Naive thymus-derived CD4-positive, alpha-beta T cell (primary cell): ENCODE measurements at regions of chrX and their contacts with region 1.

Region 1: DNA sequence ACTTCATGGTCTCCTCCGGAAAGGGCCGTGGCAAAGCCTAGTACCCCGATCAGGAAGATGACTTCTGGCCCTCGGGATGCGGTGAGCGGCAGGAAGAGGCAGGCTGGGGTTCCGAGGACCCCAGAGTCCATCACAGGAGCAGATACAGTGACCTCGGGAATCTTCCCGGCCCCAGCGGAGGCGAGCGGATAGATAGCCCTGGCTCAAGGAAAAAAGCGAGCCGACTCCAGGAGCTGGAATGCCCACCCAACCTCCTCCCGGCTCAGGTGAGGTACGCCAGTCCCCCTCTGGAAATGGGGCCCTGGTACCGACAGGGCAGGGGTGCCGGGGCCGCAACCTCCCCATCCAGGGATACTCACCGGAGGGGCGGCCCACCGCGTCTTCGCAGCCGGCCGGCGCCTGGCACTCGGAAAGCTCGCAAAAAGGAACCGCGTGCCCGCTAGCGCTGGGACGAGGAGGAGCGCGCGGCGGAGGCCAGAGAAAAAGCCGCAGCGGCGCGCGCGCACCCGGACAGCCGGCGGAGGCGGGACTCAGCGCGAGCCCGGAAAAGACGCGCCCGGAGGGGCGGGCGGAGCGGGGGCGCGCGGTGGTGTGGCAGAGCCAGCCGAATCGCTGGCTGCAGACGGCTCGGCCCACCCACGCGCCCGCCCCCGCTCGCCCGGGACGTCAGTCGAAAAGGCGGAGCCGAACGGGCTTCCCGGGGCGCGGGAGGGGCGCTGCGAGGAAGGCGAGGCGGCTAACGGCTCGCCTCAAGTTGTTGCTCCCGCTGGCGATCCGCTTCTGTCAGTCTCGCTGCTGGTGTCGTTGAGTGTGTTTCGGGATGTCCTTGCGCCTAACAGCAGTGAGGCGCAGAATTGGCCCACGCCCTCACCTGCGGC is at the start of gene ACSL4:
- DNase-seq: peak; percentile 74 to 89 (median 84)
- ATAC-seq: peak; percentile 97
- H3K4me3 ChIP-seq: peak within 1 kb of the TSS; percentile 92
- H3K4me3 Mint-ChIP-seq: peak within 1 kb of the TSS; percentile 93 to 97 (median 96)
- H3K27ac ChIP-seq: peak within 1 kb of the TSS; percentile 86
- H3K27ac Mint-ChIP-seq: peak within 1 kb of the TSS; percentile 92 to 98 (median 94)
- H3K4me1 ChIP-seq: peaks cover 4 to 6% of the 10 kb centered on the region in 2 donors
- H3K4me1 Mint-ChIP-seq: peaks cover 13 to 36% (median 26%) of the 10 kb centered on the region in 7 donors
- H3K27me3 ChIP-seq: no peaks in the 10 kb centered on the region
- H3K27me3 Mint-ChIP-seq: no peaks in the 10 kb centered on the region
- total RNA-seq, gene ACSL4: 13.4 to 43.9 (median 21.6) TPM

Region 2: DNA sequence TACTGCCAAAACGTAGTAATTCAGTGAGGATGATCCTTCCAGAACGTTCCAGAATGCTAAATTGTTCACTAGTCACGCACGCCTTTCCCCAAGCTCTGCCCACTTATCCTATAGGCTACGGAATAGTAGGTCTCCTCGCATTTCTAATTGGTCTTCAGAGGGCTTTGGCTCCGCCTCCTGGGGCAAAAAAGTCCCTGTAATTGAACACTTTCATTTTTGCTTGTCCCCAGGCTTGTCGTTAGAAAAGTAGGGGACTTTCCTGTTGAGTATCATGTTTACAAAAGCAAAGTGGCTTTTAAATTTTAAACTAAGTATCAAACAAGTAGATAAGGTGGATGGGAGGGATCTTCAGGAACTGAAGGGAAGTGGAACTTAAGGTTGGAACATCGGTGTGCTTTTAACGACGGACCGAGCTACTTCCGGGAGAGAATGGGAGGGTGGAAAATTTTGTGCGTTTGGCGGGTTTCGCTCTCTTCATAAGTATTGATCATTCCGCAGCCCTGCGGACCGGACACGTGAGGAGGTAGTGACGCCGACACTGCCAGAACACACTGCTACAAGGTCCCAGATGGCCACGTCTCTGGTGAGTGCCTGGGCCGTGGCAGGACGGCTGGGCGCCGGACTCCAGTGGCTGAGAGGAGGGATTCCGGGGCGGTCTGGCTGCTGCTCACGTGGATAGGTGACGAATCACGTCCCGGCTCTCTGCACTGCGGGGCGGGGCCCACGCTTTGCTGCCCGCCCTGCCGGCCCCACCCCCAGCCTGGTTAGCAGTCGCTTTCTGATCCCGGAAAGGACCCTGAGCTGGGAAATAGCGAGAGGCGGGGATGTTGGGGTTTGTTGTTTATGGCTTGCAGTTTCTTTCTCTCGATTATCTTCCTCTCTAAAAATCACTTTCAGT is 196.3 kb before region 1 on chrX and contains the start of gene NXT2:
- CTCF ChIA-PET with region 1: no interaction called
- POLR2A ChIA-PET with region 1: interaction called, 7 read pairs
- intact Hi-C with region 1: loop called (anchors 1 kb)
- DNase-seq: peak; percentile 64 to 89 (median 83)
- ATAC-seq: peak; percentile 100
- H3K4me3 ChIP-seq: peak within 1 kb of the TSS; percentile 87
- H3K4me3 Mint-ChIP-seq: peak within 1 kb of the TSS; percentile 79 to 98 (median 95)
- H3K27ac ChIP-seq: peak within 1 kb of the TSS; percentile 87
- H3K27ac Mint-ChIP-seq: peak within 1 kb of the TSS; percentile 92 to 99 (median 98)
- H3K4me1 ChIP-seq: peaks cover 0 to 3% of the 10 kb centered on the region in 2 donors
- H3K4me1 Mint-ChIP-seq: peaks cover 0 to 14% (median 8%) of the 10 kb centered on the region in 7 donors
- H3K27me3 ChIP-seq: no peaks in the 10 kb centered on the region
- H3K27me3 Mint-ChIP-seq: peaks cover 0 to 19% (median 12%) of the 10 kb centered on the region in 5 donors
- total RNA-seq, gene NXT2: 5.7 to 13.5 (median 7.7) TPM

Region 3: GRCh38 chrX:109714340-109714958 is 18.6 kb before region 1 on chrX:
- CTCF ChIA-PET with region 1: interaction called, 3 read pairs
- POLR2A ChIA-PET with region 1: no interaction called
- intact Hi-C with region 1: loop called in 1 of 2 experiments (anchors 2 kb)
- DNase-seq: no peak
- ATAC-seq: no peak
- H3K4me3 ChIP-seq: no peak overlapping the region
- H3K4me3 Mint-ChIP-seq: no peak overlapping the region
- H3K27ac ChIP-seq: no peak overlapping the region
- H3K27ac Mint-ChIP-seq: no peak overlapping the region
- H3K4me1 ChIP-seq: no peaks in the 10 kb centered on the region
- H3K4me1 Mint-ChIP-seq: peaks cover 6 to 46% (median 28%) of the 10 kb centered on the region in 7 donors
- H3K27me3 ChIP-seq: no peaks in the 10 kb centered on the region
- H3K27me3 Mint-ChIP-seq: no peaks in the 10 kb centered on the region

Region 4: GRCh38 chrX:109751698-109752097 is 18.7 kb after region 1 on chrX:
- CTCF ChIA-PET with region 1: no interaction called
- POLR2A ChIA-PET with region 1: no interaction called
- intact Hi-C with region 1: no loop called
- DNase-seq: no peak
- ATAC-seq: no peak
- H3K4me3 ChIP-seq: no peak overlapping the region
- H3K4me3 Mint-ChIP-seq: no peak overlapping the region
- H3K27ac ChIP-seq: no peak overlapping the region
- H3K27ac Mint-ChIP-seq: no peak overlapping the region
- H3K4me1 ChIP-seq: no peaks in the 10 kb centered on the region
- H3K4me1 Mint-ChIP-seq: no peaks in the 10 kb centered on the region
- H3K27me3 ChIP-seq: no peaks in the 10 kb centered on the region
- H3K27me3 Mint-ChIP-seq: no peaks in the 10 kb centered on the region

Region 5: DNA sequence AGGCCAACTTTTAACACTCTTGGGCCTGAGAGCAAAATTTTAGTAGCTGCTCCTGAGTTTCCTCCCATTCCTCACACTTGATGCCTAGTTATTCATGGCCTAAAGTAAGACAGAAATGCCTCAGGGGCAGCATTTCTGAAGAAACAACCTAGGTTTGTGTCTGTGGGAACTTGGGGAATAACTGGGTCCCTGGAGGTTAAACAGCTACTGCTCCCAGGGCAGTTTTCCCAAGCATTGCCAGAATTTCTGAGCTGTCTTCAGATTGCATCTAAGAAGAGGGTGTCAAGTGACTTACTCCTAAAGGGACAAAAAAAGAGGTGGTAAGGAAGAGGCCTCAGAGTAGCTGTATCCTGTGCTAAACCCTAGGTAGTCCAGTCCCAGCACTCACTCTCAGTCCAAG is 130.8 kb after region 1 on chrX:
- CTCF ChIA-PET with region 1: no interaction called
- POLR2A ChIA-PET with region 1: no interaction called
- intact Hi-C with region 1: no loop called
- DNase-seq: no peak
- ATAC-seq: no peak
- H3K4me3 ChIP-seq: no peak overlapping the region
- H3K4me3 Mint-ChIP-seq: no peak overlapping the region
- H3K27ac ChIP-seq: no peak overlapping the region
- H3K27ac Mint-ChIP-seq: no peak overlapping the region
- H3K4me1 ChIP-seq: no peaks in the 10 kb centered on the region
- H3K4me1 Mint-ChIP-seq: peaks cover 0 to 2% (median 0%) of the 10 kb centered on the region in 7 donors
- H3K27me3 ChIP-seq: no peaks in the 10 kb centered on the region
- H3K27me3 Mint-ChIP-seq: no peaks in the 10 kb centered on the region

Region 6: DNA sequence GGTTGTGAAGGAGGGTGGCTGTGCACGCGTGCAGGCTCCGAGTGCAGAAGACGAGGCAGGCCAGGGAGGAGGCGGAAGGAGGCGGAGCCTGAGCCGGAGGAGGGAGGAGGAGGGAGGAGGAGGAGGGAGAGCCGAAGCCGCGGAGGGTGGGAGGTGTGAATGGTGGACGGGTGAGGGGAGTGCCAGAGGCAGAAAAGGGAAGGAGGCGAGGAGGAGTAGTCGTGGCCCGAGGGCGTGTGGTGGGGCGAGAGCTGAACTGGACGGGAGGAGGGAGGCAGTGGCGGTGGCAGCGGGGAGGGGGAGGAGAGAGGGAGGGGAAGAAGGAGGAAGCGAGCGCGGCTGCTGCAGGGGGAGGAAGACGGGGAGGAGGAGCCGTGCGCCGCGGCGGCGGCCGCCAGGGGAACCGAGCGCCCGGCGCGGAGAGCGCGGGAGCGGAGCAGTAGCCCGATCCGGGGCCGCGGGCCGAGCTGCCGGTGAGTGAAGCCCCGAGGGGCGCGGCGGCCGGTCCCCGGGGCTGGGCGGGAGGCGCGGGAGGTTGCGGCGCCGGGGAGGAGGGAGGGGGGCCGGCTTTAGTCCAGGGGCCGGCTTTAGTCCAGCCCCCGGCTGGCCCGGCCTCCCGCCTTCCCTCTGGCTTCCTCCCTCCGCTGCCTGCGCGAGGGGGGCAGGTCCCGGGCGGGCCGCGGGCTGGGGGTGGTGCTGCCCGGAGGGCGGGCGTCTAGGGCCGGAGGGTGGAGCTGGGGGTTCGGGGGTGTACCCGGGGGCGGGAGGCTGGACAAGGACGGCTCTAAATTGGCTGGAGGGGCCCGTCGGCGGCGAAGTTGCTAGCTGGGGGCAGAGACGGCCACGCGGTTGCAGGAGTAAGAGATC is 269.5 kb after region 1 on chrX and contains the start of gene TMEM164:
- CTCF ChIA-PET with region 1: no interaction called
- POLR2A ChIA-PET with region 1: no interaction called
- intact Hi-C with region 1: loop called (anchors 1 kb)
- DNase-seq: peak; percentile 58 to 82 (median 75)
- ATAC-seq: peak; percentile 87
- H3K4me3 ChIP-seq: peak within 1 kb of the TSS; percentile 54
- H3K4me3 Mint-ChIP-seq: peak within 1 kb of the TSS; percentile 76 to 96 (median 88)
- H3K27ac ChIP-seq: peak within 1 kb of the TSS; percentile 64
- H3K27ac Mint-ChIP-seq: peak within 1 kb of the TSS; percentile 82 to 95 (median 88)
- H3K4me1 ChIP-seq: no peaks in the 10 kb centered on the region
- H3K4me1 Mint-ChIP-seq: peaks cover 14 to 42% (median 34%) of the 10 kb centered on the region in 7 donors
- H3K27me3 ChIP-seq: no peaks in the 10 kb centered on the region
- H3K27me3 Mint-ChIP-seq: no peaks in the 10 kb centered on the region
- total RNA-seq, gene TMEM164: 16.3 to 30.1 (median 17.9) TPM

Region 7: DNA sequence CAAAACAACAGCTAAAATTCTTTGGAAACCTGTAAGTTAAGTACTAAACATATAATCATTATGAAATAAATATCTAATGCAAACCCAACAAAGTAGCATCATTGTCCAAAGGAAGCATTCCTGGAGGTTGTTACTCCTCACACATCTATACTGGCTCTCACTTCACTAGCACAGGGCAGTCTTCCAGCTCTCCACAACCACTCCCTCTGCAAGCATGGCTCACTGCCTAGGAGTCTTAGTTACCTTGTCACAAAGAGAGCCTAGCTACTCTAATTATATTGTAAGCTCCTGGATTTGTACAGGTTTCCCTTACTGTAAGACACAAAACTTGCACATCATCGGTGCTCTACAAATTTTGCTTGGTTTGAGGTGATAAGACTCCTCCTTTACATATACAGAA is 508.8 kb after region 1 on chrX:
- CTCF ChIA-PET with region 1: no interaction called
- POLR2A ChIA-PET with region 1: no interaction called
- intact Hi-C with region 1: loop called in 1 of 2 experiments (anchors 10 kb)
- DNase-seq: no peak
- ATAC-seq: no peak
- H3K4me3 ChIP-seq: no peak overlapping the region
- H3K4me3 Mint-ChIP-seq: no peak overlapping the region
- H3K27ac ChIP-seq: no peak overlapping the region
- H3K27ac Mint-ChIP-seq: peak overlapping the region in 2 of 9 donors; percentile 52 to 86
- H3K4me1 ChIP-seq: peaks cover 7 to 11% of the 10 kb centered on the region in 2 donors
- H3K4me1 Mint-ChIP-seq: peaks cover 8 to 57% (median 43%) of the 10 kb centered on the region in 7 donors
- H3K27me3 ChIP-seq: no peaks in the 10 kb centered on the region
- H3K27me3 Mint-ChIP-seq: no peaks in the 10 kb centered on the region